ENCODE measurements at regions of chr9 and their contacts with region 1.

Region 1: GRCh38 chr9:77738932-77739331 is 90.8 kb upstream of the GNA14 start:
- DNase-seq: no peak
- ATAC-seq: no peak
- H3K4me3 ChIP-seq: no peak overlapping the region
- H3K27ac ChIP-seq: no peak overlapping the region
- H3K4me1 ChIP-seq: peaks cover 7% of the 10 kb centered on the region; the same call in 1 of the 3 replicates
- CTCF ChIP-seq: no peak
- EP300 ChIP-seq: no peak
- POLR2A ChIP-seq: no peak
- RAD21 ChIP-seq: no peak

Region 2: GRCh38 chr9:77751341-77752091 is 12.6 kb after region 1 on chr9:
- CTCF ChIA-PET with region 1: interaction called, 11 read pairs
- POLR2A ChIA-PET with region 1: no interaction called
- DNase-seq: peak; percentile 13 to 58
- ATAC-seq: peak; percentile 88 to 95
- H3K4me3 ChIP-seq: no peak overlapping the region
- H3K27ac ChIP-seq: no peak overlapping the region
- H3K4me1 ChIP-seq: 0 out of 3 replicates have a peak, but pooled peaks cover 6% of the 10 kb centered on the region
- CTCF ChIP-seq: peak; percentile 86
- EP300 ChIP-seq: no peak
- POLR2A ChIP-seq: no peak
- RAD21 ChIP-seq: peak; percentile 86 to 87

Measured in A549 (cell line).